GM12878 (cell line): ENCODE measurements at regions of chr20 and their contacts with region 1.

Region 1: DNA sequence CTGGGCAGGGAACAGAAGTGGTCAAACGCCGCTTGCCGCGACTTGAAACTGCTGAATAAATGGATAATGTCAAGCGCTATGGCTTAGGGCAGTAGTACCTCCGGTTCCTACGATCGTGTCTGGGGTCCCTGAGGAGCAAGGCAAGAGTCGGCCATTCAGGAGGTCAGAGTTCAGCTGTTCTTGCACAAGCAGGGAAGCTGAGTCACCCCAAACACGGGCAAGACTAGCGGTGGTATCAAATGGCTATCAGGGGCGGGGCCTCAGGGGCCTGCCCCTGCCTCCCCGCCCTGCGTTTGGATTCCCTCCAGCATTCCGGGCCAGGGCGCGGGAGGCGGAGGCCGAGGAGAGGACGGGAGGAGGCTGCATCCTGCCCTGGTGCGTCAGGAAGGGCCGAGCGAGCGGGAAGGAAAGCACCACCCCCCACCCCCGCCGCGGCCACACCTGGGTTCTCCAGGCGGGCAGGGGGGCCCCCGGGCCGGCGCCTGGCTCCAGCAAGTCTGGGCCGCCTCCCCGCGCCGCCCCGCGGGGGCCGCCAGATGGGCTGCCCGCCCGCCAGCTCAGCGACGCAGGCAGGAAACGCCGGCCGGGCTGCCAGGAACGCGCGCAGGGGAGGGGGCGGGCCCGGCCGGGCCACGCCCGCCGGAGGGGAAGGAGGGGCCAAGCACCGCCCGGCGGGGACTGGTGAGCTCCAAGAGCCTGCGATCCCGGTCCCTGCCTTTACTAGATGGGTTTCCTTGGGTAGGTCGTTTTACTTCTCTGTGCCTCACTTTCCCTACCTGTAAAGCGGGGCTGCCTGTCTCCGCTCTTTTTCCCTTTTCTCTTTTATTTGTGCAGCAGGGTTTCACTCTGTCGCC is 32.2 kb upstream of the ID1 start:
- DNase-seq: peak; percentile 41
- ATAC-seq: peak; percentile 94
- H3K4me3 ChIP-seq: peak overlapping the region; percentile 81
- H3K27ac ChIP-seq: peak overlapping the region; percentile 88
- H3K4me1 ChIP-seq: peaks cover 12% of the 10 kb centered on the region
- H3K27me3 ChIP-seq: no peaks in the 10 kb centered on the region; a peak in 1 of 4 replicates
- CTCF ChIP-seq: no peak
- EP300 ChIP-seq: no peak
- POLR2A ChIP-seq: peak; percentile 72
- RAD21 ChIP-seq: no peak

Region 2: DNA sequence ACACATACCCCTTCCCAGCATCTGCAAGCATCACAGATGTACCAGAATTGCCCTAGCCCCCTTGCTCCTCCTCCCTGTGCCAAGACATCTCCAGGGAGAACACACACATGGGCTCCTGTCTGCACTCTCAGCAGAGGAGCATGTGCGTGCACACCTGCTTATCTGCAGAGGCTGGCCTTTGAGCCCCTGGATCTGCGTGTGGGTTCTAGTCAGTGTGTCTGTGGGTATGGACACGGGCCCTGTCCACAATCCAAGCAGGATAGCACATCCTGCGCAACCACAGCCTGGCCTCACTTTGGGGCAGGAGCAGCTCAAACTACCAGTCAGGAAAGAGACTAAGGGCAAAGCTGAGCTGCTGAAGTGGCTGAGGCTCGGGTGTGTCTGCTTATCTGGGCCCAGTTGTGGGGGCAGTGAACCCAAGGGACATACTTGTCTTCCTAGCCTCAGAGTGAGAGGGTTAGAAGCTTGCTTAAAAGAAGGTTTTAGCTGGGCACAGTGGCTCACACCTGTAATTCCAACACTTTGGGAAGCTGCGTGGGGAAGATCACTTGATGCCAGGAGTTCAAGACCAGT is 17.6 kb before region 1 on chr20:
- CTCF ChIA-PET with region 1: interaction called, 56 read pairs
- POLR2A ChIA-PET with region 1: interaction called, 3 read pairs
- RAD21 ChIA-PET with region 1: interaction called, 4 read pairs
- SMC1A ChIA-PET with region 1: interaction called, 3 read pairs
- in situ Hi-C with region 1: no loop called
- intact Hi-C with region 1: no loop called
- DNase-seq: no peak
- ATAC-seq: no peak
- H3K4me3 ChIP-seq: no peak overlapping the region
- H3K27ac ChIP-seq: no peak overlapping the region
- H3K4me1 ChIP-seq: no peaks in the 10 kb centered on the region
- H3K27me3 ChIP-seq: no peaks in the 10 kb centered on the region
- CTCF ChIP-seq: no peak
- EP300 ChIP-seq: no peak
- POLR2A ChIP-seq: no peak; the same call in 1 of the 2 replicates
- RAD21 ChIP-seq: no peak

Region 3: GRCh38 chr20:31560094-31560899 is 12.6 kb before region 1 on chr20:
- CTCF ChIA-PET with region 1: interaction called, 56 read pairs
- POLR2A ChIA-PET with region 1: interaction called, 5 read pairs
- RAD21 ChIA-PET with region 1: interaction called, 5 read pairs
- SMC1A ChIA-PET with region 1: interaction called, 5 read pairs
- in situ Hi-C with region 1: no loop called
- intact Hi-C with region 1: no loop called
- DNase-seq: no peak
- ATAC-seq: peak; percentile 83
- H3K4me3 ChIP-seq: no peak overlapping the region
- H3K27ac ChIP-seq: peak overlapping the region; percentile 15; the same call in 1 of the 2 replicates
- H3K4me1 ChIP-seq: no peaks in the 10 kb centered on the region
- H3K27me3 ChIP-seq: no peaks in the 10 kb centered on the region
- CTCF ChIP-seq: peak; percentile 76 to 94 (median 83)
- EP300 ChIP-seq: no peak
- POLR2A ChIP-seq: 0 out of 2 replicates have a peak, but pooled peaks have one; percentile 20
- RAD21 ChIP-seq: peak; percentile 43

Region 4: DNA sequence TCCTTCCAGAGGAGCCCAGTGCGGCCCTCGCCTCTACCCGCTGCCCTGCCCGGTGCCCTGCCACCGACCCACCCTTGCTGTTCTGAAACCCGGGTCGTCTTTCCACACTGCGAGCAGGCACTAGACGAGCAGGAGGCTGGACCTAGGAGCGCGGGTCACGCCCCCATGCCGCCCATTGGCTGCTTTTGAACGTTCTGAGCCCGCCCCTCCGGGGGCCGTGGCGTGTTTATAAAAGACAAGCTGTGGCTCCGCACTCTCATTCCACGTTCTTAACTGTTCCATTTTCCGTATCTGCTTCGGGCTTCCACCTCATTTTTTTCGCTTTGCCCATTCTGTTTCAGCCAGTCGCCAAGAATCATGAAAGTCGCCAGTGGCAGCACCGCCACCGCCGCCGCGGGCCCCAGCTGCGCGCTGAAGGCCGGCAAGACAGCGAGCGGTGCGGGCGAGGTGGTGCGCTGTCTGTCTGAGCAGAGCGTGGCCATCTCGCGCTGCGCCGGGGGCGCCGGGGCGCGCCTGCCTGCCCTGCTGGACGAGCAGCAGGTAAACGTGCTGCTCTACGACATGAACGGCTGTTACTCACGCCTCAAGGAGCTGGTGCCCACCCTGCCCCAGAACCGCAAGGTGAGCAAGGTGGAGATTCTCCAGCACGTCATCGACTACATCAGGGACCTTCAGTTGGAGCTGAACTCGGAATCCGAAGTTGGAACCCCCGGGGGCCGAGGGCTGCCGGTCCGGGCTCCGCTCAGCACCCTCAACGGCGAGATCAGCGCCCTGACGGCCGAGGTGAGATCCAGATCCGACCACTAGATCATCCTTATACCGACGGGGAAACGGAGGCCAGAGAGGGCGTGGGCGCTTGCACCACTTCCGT is 32.3 kb after region 1 on chr20 and contains the start of gene ID1:
- CTCF ChIA-PET with region 1: interaction called, 958 read pairs
- POLR2A ChIA-PET with region 1: interaction called, 16 read pairs
- RAD21 ChIA-PET with region 1: interaction called, 83 read pairs
- SMC1A ChIA-PET with region 1: interaction called, 12 read pairs
- in situ Hi-C with region 1: loop called (anchors 5 kb)
- intact Hi-C with region 1: no loop called
- DNase-seq: no peak
- ATAC-seq: peak; percentile 94
- H3K4me3 ChIP-seq: peak within 1 kb of the TSS; percentile 64
- H3K27ac ChIP-seq: no peak within 1 kb of the TSS
- H3K4me1 ChIP-seq: peaks cover 21% of the 10 kb centered on the region
- H3K27me3 ChIP-seq: peaks cover 10 to 18% of the 10 kb centered on the region in 2 experiments
- CTCF ChIP-seq: no peak
- EP300 ChIP-seq: no peak
- POLR2A ChIP-seq: peak; percentile 76
- RAD21 ChIP-seq: no peak
- polyA plus RNA-seq, gene ID1: 0.09 TPM in 1 of 2 experiments, not detected in the other